Adrenal gland (tissue), 19 donors: ENCODE measurements at regions of chr19 and their contacts with region 1.

Region 1: GRCh38 chr19:49391581-49392399 is 3.7 kb downstream of the KASH5 start:
- DNase-seq: peak; percentile 78 to 84 (median 80)
- H3K4me3 ChIP-seq: no peak overlapping the region
- H3K27ac ChIP-seq: no peak overlapping the region
- H3K4me1 ChIP-seq: no peaks in the 10 kb centered on the region
- H3K27me3 ChIP-seq: peaks cover 2% of the 10 kb centered on the region
- CTCF ChIP-seq: peak; percentile 69 to 93 (median 86)
- POLR2A ChIP-seq: no peak

Region 2: DNA sequence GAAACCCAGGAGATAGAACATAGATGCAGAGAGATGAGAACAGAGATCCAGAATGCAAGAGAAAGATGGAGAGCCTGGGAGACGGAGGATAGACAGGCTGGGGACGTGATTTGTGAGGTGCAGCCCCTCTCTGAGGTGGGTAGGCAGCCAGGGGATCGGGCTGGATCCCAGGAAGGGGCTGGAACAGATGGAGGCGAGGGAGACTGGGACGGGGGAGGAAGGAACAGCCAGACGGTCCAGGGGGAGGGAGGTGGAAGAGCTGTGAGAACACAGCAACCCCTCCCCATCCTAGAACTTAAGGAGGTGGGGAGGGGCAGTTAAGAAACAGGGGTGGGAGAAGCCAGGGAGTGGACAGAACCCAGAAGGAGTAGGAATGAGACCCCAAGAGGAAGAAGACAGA is 46.5 kb after region 1 on chr19:
- intact Hi-C with region 1: loop called in 1 of 2 experiments (anchors 2 kb)
- DNase-seq: no peak
- H3K4me3 ChIP-seq: no peak overlapping the region
- H3K27ac ChIP-seq: no peak overlapping the region
- H3K4me1 ChIP-seq: no peaks in the 10 kb centered on the region
- H3K27me3 ChIP-seq: peaks cover 43% of the 10 kb centered on the region
- CTCF ChIP-seq: no peak
- POLR2A ChIP-seq: no peak

Region 3: DNA sequence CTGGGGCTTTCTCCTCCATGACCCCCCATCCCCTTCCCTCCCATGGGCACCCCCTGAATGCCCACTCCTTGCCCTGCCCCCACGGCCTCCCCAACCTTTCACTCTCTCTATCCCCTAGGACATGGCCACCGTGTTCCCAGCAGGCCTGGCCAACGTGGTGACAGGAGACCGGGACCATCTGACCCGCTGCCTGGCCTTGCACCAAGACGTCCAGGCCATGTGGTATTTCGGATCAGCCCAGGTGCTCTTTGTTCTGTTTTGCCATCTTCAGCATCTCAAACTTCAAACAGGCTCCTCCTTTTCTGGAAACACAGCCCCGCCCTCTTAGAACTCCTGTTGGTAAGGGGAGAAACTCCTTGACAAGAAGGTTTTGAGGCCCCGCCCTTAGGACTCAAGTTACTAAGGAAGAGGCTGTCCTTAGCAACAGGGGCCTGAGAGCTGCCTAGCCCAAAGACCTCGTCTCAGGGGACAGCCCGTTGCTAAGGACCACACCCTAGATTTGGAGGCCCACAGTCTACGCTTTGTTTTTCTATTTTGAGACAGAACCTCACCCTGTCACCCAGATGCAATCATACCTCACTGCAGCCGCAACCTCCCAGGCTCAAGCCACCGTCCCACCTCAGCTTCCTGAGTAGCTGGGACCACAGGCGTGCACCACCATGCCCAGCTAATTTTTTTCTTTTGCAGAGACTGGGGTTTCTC is 77.1 kb after region 1 on chr19:
- intact Hi-C with region 1: no loop called
- DNase-seq: no peak
- H3K4me3 ChIP-seq: no peak overlapping the region
- H3K27ac ChIP-seq: no peak overlapping the region
- H3K4me1 ChIP-seq: peaks cover 0 to 5% of the 10 kb centered on the region in 2 donors
- H3K27me3 ChIP-seq: no peaks in the 10 kb centered on the region
- CTCF ChIP-seq: no peak
- POLR2A ChIP-seq: no peak

Region 4: GRCh38 chr19:49502866-49503581 is 111.2 kb after region 1 on chr19:
- intact Hi-C with region 1: no loop called
- DNase-seq: peak in 3 of 7 donors; percentile 53 to 72 (median 59)
- H3K4me3 ChIP-seq: no peak overlapping the region
- H3K27ac ChIP-seq: no peak overlapping the region
- H3K4me1 ChIP-seq: peaks cover 17 to 30% of the 10 kb centered on the region in 2 donors
- H3K27me3 ChIP-seq: no peaks in the 10 kb centered on the region
- CTCF ChIP-seq: peak; percentile 45 to 86 (median 75)
- POLR2A ChIP-seq: no peak

Region 5: GRCh38 chr19:49712397-49712859 is 320.6 kb after region 1 on chr19:
- intact Hi-C with region 1: no loop called
- DNase-seq: peak in 4 of 7 donors; percentile 26 to 64 (median 40)
- H3K4me3 ChIP-seq: no peak overlapping the region
- H3K27ac ChIP-seq: no peak overlapping the region
- H3K4me1 ChIP-seq: no peaks in the 10 kb centered on the region
- H3K27me3 ChIP-seq: no peaks in the 10 kb centered on the region
- CTCF ChIP-seq: no peak
- POLR2A ChIP-seq: no peak